B cell (primary cell): ENCODE measurements at regions of chr1 and their contacts with region 1.

Region 1: GRCh38 chr1:38012363-38013226 is at the start of gene UTP11:
- DNase-seq: peak; percentile 95
- ATAC-seq: peak; percentile 97
- H3K4me3 ChIP-seq: peak within 1 kb of the TSS; percentile 72 to 93 (median 83)
- H3K4me3 Mint-ChIP-seq: peak within 1 kb of the TSS; percentile 97
- H3K27ac ChIP-seq: peak within 1 kb of the TSS; percentile 76 to 90
- H3K27ac Mint-ChIP-seq: peak within 1 kb of the TSS; percentile 91
- H3K4me1 ChIP-seq: peaks cover 13 to 20% of the 10 kb centered on the region in 2 donors
- H3K4me1 Mint-ChIP-seq: peaks cover 23% of the 10 kb centered on the region
- H3K27me3 ChIP-seq: no peaks in the 10 kb centered on the region
- H3K27me3 Mint-ChIP-seq: no peaks in the 10 kb centered on the region
- CTCF ChIP-seq: no peak
- total RNA-seq, gene UTP11: 16.4 and 16.8 TPM in 2 replicates

Region 2: GRCh38 chr1:37553927-37554808 is 458.4 kb before region 1 on chr1 and contains the start of gene SNIP1:
- CTCF ChIA-PET with region 1: no interaction called
- POLR2A ChIA-PET with region 1: no interaction called
- intact Hi-C with region 1: loop called (anchors 1 kb)
- DNase-seq: peak; percentile 94
- ATAC-seq: peak; percentile 98
- H3K4me3 ChIP-seq: peak within 1 kb of the TSS; percentile 75 to 99 (median 93)
- H3K4me3 Mint-ChIP-seq: peak within 1 kb of the TSS; percentile 98
- H3K27ac ChIP-seq: peak within 1 kb of the TSS; percentile 82 to 96
- H3K27ac Mint-ChIP-seq: peak within 1 kb of the TSS; percentile 97
- H3K4me1 ChIP-seq: peaks cover 13 to 19% of the 10 kb centered on the region in 2 donors
- H3K4me1 Mint-ChIP-seq: peaks cover 33% of the 10 kb centered on the region
- H3K27me3 ChIP-seq: peaks cover 0 to 3% (median 0%) of the 10 kb centered on the region in 4 experiments
- H3K27me3 Mint-ChIP-seq: peaks cover 5% of the 10 kb centered on the region
- CTCF ChIP-seq: no peak
- total RNA-seq, gene SNIP1: 45.0 and 45.1 TPM in 2 replicates

Region 3: GRCh38 chr1:37859507-37860345 is 152.9 kb before region 1 on chr1 and contains the start of gene MTF1:
- CTCF ChIA-PET with region 1: no interaction called
- POLR2A ChIA-PET with region 1: no interaction called
- intact Hi-C with region 1: loop called (anchors 1 kb)
- DNase-seq: peak; percentile 98
- ATAC-seq: peak; percentile 98
- H3K4me3 ChIP-seq: peak within 1 kb of the TSS; percentile 72 to 100 (median 95)
- H3K4me3 Mint-ChIP-seq: peak within 1 kb of the TSS; percentile 97
- H3K27ac ChIP-seq: peak within 1 kb of the TSS; percentile 79 to 95
- H3K27ac Mint-ChIP-seq: peak within 1 kb of the TSS; percentile 94
- H3K4me1 ChIP-seq: peaks cover 16 to 18% of the 10 kb centered on the region in 2 donors
- H3K4me1 Mint-ChIP-seq: peaks cover 33% of the 10 kb centered on the region
- H3K27me3 ChIP-seq: no peaks in the 10 kb centered on the region
- H3K27me3 Mint-ChIP-seq: no peaks in the 10 kb centered on the region
- CTCF ChIP-seq: peak; percentile 94
- total RNA-seq, gene MTF1: 34.6 and 36.7 TPM in 2 replicates

Region 4: DNA sequence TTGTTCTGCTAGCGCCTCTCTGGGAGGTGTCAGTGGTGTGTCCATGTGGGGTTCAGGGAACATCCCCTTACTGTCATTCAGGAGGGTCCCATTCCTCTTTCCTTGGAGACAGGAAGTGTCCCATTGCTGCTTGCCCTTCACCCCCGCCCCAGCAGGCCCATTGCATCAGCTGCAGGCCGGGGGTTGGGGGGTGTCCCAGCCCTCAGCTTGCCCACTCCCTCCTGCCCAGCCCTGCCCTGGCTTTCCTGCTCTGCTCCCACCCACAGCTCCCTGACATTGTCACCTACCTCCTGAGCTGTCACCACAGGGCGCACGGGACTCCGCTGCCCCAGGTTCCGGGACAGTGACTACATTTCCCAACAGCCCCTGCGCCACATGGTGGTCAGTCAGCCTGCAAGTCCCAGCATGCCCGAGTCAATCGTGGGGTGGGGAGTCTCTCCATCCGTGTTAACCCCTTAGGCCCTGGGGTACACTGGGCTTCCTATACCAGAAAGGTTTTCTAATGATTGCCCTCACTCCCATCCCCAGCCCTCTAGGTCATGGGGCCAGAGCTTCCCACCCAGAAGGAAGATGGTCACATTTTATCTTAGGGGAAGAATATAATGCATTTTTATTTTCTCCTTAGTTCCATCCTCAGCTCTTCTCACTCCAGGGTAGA is 65.8 kb before region 1 on chr1 and contains the start of gene INPP5B:
- CTCF ChIA-PET with region 1: no interaction called
- POLR2A ChIA-PET with region 1: no interaction called
- intact Hi-C with region 1: loop called (anchors 1 kb)
- DNase-seq: peak; percentile 79
- ATAC-seq: peak; percentile 100
- H3K4me3 ChIP-seq: peak within 1 kb of the TSS; percentile 50 to 73 (median 67)
- H3K4me3 Mint-ChIP-seq: peak within 1 kb of the TSS; percentile 91
- H3K27ac ChIP-seq: peak within 1 kb of the TSS in 1 of 2 donors; percentile 56
- H3K27ac Mint-ChIP-seq: peak within 1 kb of the TSS; percentile 86
- H3K4me1 ChIP-seq: peaks cover 14 to 19% of the 10 kb centered on the region in 2 donors
- H3K4me1 Mint-ChIP-seq: peaks cover 14% of the 10 kb centered on the region
- H3K27me3 ChIP-seq: no peaks in the 10 kb centered on the region
- H3K27me3 Mint-ChIP-seq: no peaks in the 10 kb centered on the region
- CTCF ChIP-seq: no peak
- total RNA-seq, gene INPP5B: 63.3 and 66.9 TPM in 2 replicates

Region 5: DNA sequence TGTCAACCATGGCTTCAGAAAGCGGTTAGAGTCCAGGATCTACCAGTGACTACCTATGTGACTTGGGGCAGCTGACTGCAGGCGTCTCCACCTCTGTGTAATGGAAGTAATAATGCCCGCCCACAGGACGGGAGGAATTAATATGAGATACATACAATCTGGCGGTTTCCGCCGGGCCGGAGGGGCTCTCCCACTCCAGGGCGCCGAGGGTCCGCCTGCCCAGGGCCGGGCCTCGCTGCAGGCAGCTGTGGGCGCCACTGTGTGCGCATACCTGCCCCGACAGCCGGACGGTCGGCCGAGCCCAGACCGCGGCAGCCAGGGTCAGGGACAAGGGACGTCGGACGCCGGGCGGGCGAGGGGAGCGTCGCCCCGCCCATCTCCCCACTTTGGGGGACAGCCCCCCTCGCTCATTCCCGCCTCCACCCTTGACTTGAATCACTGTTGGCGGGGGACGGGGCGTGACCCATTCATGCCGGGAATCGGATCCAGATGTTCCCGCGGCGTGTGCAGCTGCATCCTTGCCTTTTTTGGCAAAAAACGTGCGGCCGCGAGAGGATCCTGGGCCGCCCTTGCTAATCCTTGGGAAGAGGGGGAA is 16.7 kb before region 1 on chr1:
- CTCF ChIA-PET with region 1: interaction called, 26 read pairs
- POLR2A ChIA-PET with region 1: interaction called, 11 read pairs
- intact Hi-C with region 1: no loop called
- DNase-seq: no peak
- ATAC-seq: peak; percentile 63
- H3K4me3 ChIP-seq: peak overlapping the region in 4 of 5 experiments; percentile 52 to 74 (median 57)
- H3K4me3 Mint-ChIP-seq: peak overlapping the region; percentile 84
- H3K27ac ChIP-seq: peak overlapping the region in 1 of 2 donors; percentile 59
- H3K27ac Mint-ChIP-seq: peak overlapping the region; percentile 26
- H3K4me1 ChIP-seq: peaks cover 9 to 15% of the 10 kb centered on the region in 2 donors
- H3K4me1 Mint-ChIP-seq: peaks cover 15% of the 10 kb centered on the region
- H3K27me3 ChIP-seq: no peaks in the 10 kb centered on the region
- H3K27me3 Mint-ChIP-seq: no peaks in the 10 kb centered on the region
- CTCF ChIP-seq: no peak

Region 6: GRCh38 chr1:38046884-38047602 is 34.4 kb after region 1 on chr1:
- CTCF ChIA-PET with region 1: no interaction called
- POLR2A ChIA-PET with region 1: no interaction called
- intact Hi-C with region 1: loop called (anchors 2 kb)
- DNase-seq: peak; percentile 86
- ATAC-seq: peak; percentile 89
- H3K4me3 ChIP-seq: peak overlapping the region in 4 of 5 experiments; percentile 43 to 68 (median 60)
- H3K4me3 Mint-ChIP-seq: peak overlapping the region; percentile 90
- H3K27ac ChIP-seq: no peak overlapping the region
- H3K27ac Mint-ChIP-seq: peak overlapping the region; percentile 53
- H3K4me1 ChIP-seq: peaks cover 24% of the 10 kb centered on the region in 2 donors
- H3K4me1 Mint-ChIP-seq: peaks cover 22% of the 10 kb centered on the region
- H3K27me3 ChIP-seq: peaks cover 0 to 44% (median 30%) of the 10 kb centered on the region in 4 experiments
- H3K27me3 Mint-ChIP-seq: peaks cover 24% of the 10 kb centered on the region
- CTCF ChIP-seq: no peak

Region 7: DNA sequence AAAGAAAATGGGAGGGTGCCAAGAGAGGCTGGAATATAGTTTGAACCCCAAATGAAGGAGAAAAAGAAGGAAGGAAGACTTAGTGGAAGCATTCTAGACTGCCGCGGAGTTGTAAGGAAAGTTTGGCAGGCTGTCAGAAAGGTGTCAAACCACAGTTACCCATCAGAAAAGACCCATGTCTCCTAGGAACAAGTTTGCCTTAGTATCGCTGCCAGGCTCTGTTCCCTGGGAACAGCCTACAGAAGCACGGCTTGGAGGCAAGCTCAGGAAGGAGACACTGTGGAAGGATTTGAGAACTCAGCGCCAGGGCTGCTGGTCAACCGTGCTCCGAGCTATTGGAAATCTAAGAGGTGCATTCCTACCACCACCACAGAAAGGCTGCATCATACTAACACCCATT is 649.5 kb after region 1 on chr1:
- CTCF ChIA-PET with region 1: no interaction called
- POLR2A ChIA-PET with region 1: interaction called, 12 read pairs
- intact Hi-C with region 1: no loop called
- DNase-seq: no peak
- ATAC-seq: no peak
- H3K4me3 ChIP-seq: no peak overlapping the region
- H3K4me3 Mint-ChIP-seq: no peak overlapping the region
- H3K27ac ChIP-seq: no peak overlapping the region
- H3K27ac Mint-ChIP-seq: no peak overlapping the region
- H3K4me1 ChIP-seq: no peaks in the 10 kb centered on the region
- H3K4me1 Mint-ChIP-seq: no peaks in the 10 kb centered on the region
- H3K27me3 ChIP-seq: peaks cover 0 to 12% (median 4%) of the 10 kb centered on the region in 4 experiments
- H3K27me3 Mint-ChIP-seq: peaks cover 38% of the 10 kb centered on the region
- CTCF ChIP-seq: no peak